ENCODE measurements at regions of chr16 and their contacts with region 1.

Region 1: GRCh38 chr16:56623637-56624036 is 1.9 kb upstream of the MT1E start:
- DNase-seq: no peak
- ATAC-seq: no peak
- H3K4me3 ChIP-seq: no peak overlapping the region
- H3K4me3 Mint-ChIP-seq: no peak overlapping the region
- H3K27ac ChIP-seq: no peak overlapping the region
- H3K27ac Mint-ChIP-seq: no peak overlapping the region
- H3K4me1 ChIP-seq: peaks cover 0 to 21% of the 10 kb centered on the region in 2 experiments
- H3K4me1 Mint-ChIP-seq: peaks cover 13 to 18% (median 16%) of the 10 kb centered on the region in 3 donors
- H3K27me3 ChIP-seq: peaks cover 14 to 20% of the 10 kb centered on the region in 2 experiments
- H3K27me3 Mint-ChIP-seq: peaks cover 0 to 16% of the 10 kb centered on the region in 2 donors

Region 2: GRCh38 chr16:56589141-56590039 is 34.2 kb before region 1 on chr16 and contains the start of gene MT3:
- CTCF ChIA-PET with region 1: no interaction called
- POLR2A ChIA-PET with region 1: interaction called in 1 of 2 experiments, 10 read pairs
- DNase-seq: peak in 15 of 35 experiments; percentile 5 to 52 (median 28)
- ATAC-seq: peak; percentile 82 to 90 (median 85)
- H3K4me3 ChIP-seq: peak within 1 kb of the TSS; percentile 52 to 77
- H3K4me3 Mint-ChIP-seq: peak within 1 kb of the TSS; percentile 71 to 88 (median 78)
- H3K27ac ChIP-seq: no peak within 1 kb of the TSS
- H3K27ac Mint-ChIP-seq: no peak within 1 kb of the TSS
- H3K4me1 ChIP-seq: peaks cover 0 to 14% of the 10 kb centered on the region in 2 experiments
- H3K4me1 Mint-ChIP-seq: peaks cover 10 to 14% (median 12%) of the 10 kb centered on the region in 3 donors
- H3K27me3 ChIP-seq: peaks cover 2 to 31% of the 10 kb centered on the region in 2 experiments
- H3K27me3 Mint-ChIP-seq: peaks cover 14 to 45% of the 10 kb centered on the region in 2 donors
- total RNA-seq, gene MT3: 0.66 to 1.9 (median 0.84) TPM in 4 of 5 donors, not detected in the other

Region 3: GRCh38 chr16:56732366-56732765 is 108.7 kb after region 1 on chr16:
- CTCF ChIA-PET with region 1: no interaction called
- POLR2A ChIA-PET with region 1: no interaction called
- DNase-seq: no peak
- ATAC-seq: no peak
- H3K4me3 ChIP-seq: no peak overlapping the region
- H3K4me3 Mint-ChIP-seq: no peak overlapping the region
- H3K27ac ChIP-seq: no peak overlapping the region
- H3K27ac Mint-ChIP-seq: no peak overlapping the region
- H3K4me1 ChIP-seq: peaks cover 16 to 34% of the 10 kb centered on the region in 2 experiments
- H3K4me1 Mint-ChIP-seq: peaks cover 26 to 28% (median 27%) of the 10 kb centered on the region in 3 donors
- H3K27me3 ChIP-seq: no peaks in the 10 kb centered on the region
- H3K27me3 Mint-ChIP-seq: no peaks in the 10 kb centered on the region

Region 4: GRCh38 chr16:57367116-57367752 is 743.6 kb after region 1 on chr16:
- CTCF ChIA-PET with region 1: no interaction called
- POLR2A ChIA-PET with region 1: no interaction called
- DNase-seq: no peak
- ATAC-seq: no peak
- H3K4me3 ChIP-seq: no peak overlapping the region
- H3K4me3 Mint-ChIP-seq: no peak overlapping the region
- H3K27ac ChIP-seq: no peak overlapping the region
- H3K27ac Mint-ChIP-seq: no peak overlapping the region
- H3K4me1 ChIP-seq: no peaks in the 10 kb centered on the region
- H3K4me1 Mint-ChIP-seq: peaks cover 0 to 4% (median 0%) of the 10 kb centered on the region in 3 donors
- H3K27me3 ChIP-seq: peaks cover 0 to 48% of the 10 kb centered on the region in 2 experiments
- H3K27me3 Mint-ChIP-seq: peaks cover 9 to 25% of the 10 kb centered on the region in 2 donors